T-cell (primary cell): ENCODE measurements at regions of chr14 and their contacts with region 1.

Region 1: GRCh38 chr14:76911473-76911872 is 85.3 kb downstream of the LRRC74A start:
- DNase-seq: no peak
- ATAC-seq: no peak
- H3K4me3 ChIP-seq: no peak overlapping the region
- H3K4me3 Mint-ChIP-seq: no peak overlapping the region
- H3K27ac ChIP-seq: no peak overlapping the region
- H3K27ac Mint-ChIP-seq: no peak overlapping the region
- H3K4me1 ChIP-seq: peaks cover 4 to 28% of the 10 kb centered on the region in 2 experiments
- H3K4me1 Mint-ChIP-seq: peaks cover 19 to 30% (median 26%) of the 10 kb centered on the region in 3 donors
- H3K27me3 ChIP-seq: no peaks in the 10 kb centered on the region
- H3K27me3 Mint-ChIP-seq: no peaks in the 10 kb centered on the region

Region 2: DNA sequence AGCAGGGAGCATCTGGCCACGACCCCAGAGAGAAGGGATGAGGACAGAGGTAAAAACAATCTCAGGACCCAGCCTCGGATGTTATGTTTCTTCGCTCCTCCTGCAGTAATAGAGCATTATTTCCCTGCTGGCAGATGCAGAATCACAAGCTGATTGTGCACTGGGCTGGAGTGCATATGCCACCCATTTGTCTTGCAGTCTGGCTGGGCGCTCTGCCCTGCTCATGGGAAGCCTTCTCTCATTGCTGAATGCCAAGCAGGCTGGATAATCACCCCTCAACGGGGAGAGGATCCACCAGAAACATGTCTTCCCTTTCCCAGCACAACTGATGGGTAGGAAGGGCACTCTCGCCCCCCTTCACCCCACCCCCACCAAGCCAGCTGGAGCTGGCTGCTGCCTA is 158.7 kb before region 1 on chr14:
- CTCF ChIA-PET with region 1: no interaction called
- POLR2A ChIA-PET with region 1: no interaction called
- DNase-seq: no peak
- ATAC-seq: no peak
- H3K4me3 ChIP-seq: no peak overlapping the region
- H3K4me3 Mint-ChIP-seq: no peak overlapping the region
- H3K27ac ChIP-seq: no peak overlapping the region
- H3K27ac Mint-ChIP-seq: no peak overlapping the region
- H3K4me1 ChIP-seq: no peaks in the 10 kb centered on the region
- H3K4me1 Mint-ChIP-seq: no peaks in the 10 kb centered on the region
- H3K27me3 ChIP-seq: peaks cover 0 to 11% of the 10 kb centered on the region in 2 experiments
- H3K27me3 Mint-ChIP-seq: peaks cover 2 to 6% of the 10 kb centered on the region in 2 donors

Region 3: GRCh38 chr14:77053046-77053841 is 141.8 kb after region 1 on chr14:
- CTCF ChIA-PET with region 1: interaction called, 21 to 29 read pairs
- POLR2A ChIA-PET with region 1: no interaction called
- DNase-seq: peak; percentile 45 to 90 (median 75)
- ATAC-seq: peak; percentile 78 to 97 (median 88)
- H3K4me3 ChIP-seq: no peak overlapping the region
- H3K4me3 Mint-ChIP-seq: no peak overlapping the region
- H3K27ac ChIP-seq: no peak overlapping the region
- H3K27ac Mint-ChIP-seq: no peak overlapping the region
- H3K4me1 ChIP-seq: peaks cover 0 to 21% of the 10 kb centered on the region in 2 experiments
- H3K4me1 Mint-ChIP-seq: peaks cover 11 to 31% (median 15%) of the 10 kb centered on the region in 3 donors
- H3K27me3 ChIP-seq: no peaks in the 10 kb centered on the region
- H3K27me3 Mint-ChIP-seq: no peaks in the 10 kb centered on the region